CD8-positive, alpha-beta T cell (primary cell): ENCODE measurements at regions of chr2 and their contacts with region 1.

Region 1: DNA sequence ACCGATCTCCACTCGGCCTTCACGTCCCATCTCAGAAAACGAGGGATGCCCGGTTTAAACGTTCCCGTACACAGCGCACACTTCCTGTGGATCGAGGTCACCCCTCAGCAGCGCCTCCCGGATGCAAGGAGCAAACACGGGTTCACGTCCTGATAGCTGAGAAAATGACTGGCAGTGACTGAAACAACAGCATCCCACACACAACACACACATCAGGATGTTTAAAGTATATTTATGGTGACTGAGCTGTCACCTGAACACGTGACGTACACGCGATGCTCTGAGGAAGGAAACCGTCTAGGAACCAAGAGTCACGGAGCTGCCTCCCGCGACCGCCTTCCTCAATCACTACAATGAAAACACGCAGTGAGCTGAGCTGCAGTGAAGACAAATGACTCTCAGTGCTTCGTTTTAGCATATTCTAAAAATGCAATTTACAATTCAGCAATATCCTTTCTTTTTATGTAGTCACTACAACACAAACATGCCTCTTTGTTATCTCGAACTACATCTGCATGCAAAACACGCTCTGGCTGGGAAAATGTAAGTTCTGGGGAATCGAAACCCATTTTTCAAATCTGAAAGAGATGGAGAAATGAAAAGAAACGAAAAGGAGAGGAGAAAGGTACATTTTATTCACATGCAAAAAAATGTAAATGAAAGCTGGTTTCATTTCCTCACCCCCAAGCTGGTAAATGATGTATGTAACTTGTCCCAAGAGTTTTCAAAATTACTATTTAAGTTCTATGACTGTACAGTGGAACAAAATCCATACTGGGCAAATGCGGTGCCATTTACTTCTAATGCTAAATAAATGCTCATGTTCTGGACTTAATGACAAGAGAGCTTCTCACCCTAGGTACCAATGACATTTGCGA is 19.8 kb downstream of the HDAC4 start:
- DNase-seq: peak; percentile 51 to 87 (median 71)
- ATAC-seq: peak; percentile 90
- H3K4me3 ChIP-seq: peak overlapping the region; percentile 26 to 36
- H3K4me3 Mint-ChIP-seq: peak overlapping the region; percentile 86
- H3K27ac ChIP-seq: peak overlapping the region; percentile 42 to 62
- H3K27ac Mint-ChIP-seq: peak overlapping the region; percentile 96
- H3K4me1 ChIP-seq: peaks cover 17% of the 10 kb centered on the region
- H3K4me1 Mint-ChIP-seq: peaks cover 30% of the 10 kb centered on the region
- H3K27me3 ChIP-seq: no peaks in the 10 kb centered on the region
- H3K27me3 Mint-ChIP-seq: no peaks in the 10 kb centered on the region
- CTCF ChIP-seq: no peak

Region 2: DNA sequence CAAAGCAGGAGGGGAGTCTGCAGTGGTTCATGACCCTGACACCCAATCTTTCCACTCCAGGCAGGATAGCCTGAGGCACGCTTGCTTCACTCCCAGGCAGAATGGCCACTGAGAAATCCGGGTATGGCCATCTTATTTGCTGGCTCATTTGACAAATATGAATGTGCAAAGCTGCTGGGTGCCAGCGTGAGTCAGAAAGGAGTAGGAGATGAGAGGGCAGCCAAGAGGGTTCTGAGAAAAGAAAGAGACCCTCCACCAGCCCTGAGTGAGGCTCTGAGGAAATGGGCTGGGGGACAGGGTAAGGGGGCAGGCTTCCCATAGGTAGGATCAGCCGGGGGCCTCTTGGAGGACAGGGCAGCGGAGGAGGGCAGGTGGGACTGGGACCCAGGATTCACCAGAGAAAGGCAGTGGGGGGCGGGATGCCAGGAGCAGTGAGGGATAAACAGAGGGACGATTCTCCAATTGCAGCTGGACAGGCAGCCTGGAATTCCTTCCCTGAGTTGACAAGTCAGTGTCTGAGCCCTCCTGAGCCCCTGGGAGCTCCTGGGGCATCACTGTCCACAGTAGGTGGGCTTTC is 1506.4 kb before region 1 on chr2:
- CTCF ChIA-PET with region 1: no interaction called
- POLR2A ChIA-PET with region 1: no interaction called
- intact Hi-C with region 1: no loop called
- DNase-seq: no peak
- ATAC-seq: no peak
- H3K4me3 ChIP-seq: no peak overlapping the region
- H3K4me3 Mint-ChIP-seq: no peak overlapping the region
- H3K27ac ChIP-seq: no peak overlapping the region
- H3K27ac Mint-ChIP-seq: no peak overlapping the region
- H3K4me1 ChIP-seq: no peaks in the 10 kb centered on the region
- H3K4me1 Mint-ChIP-seq: peaks cover 7% of the 10 kb centered on the region
- H3K27me3 ChIP-seq: no peaks in the 10 kb centered on the region
- H3K27me3 Mint-ChIP-seq: peaks cover 11% of the 10 kb centered on the region
- CTCF ChIP-seq: no peak

Region 3: DNA sequence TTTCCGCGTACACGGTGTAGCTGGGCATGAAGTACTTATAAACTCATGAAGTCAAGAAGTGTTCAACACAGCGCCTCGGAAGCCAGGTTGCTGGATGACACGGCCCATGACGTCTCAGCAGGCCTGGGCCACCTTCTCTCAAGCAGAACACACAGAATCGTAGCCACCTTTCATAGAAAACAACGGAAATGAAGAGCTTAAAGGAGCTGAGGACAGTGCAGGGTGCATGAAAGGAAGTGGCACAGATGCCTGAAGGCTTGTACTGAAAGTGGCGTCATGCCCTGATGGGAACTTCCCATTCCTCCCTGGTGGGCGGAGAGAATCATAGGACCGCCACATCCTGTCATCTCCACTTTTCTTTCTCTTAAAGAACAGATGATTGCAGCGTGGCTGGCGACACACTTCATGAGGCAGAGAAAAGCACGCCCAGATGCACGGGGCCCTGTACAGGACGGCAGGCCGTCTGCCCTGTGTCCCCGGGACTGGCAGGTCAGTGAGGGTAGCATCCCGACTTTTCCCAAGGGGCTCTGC is 11.4 kb before region 1 on chr2:
- CTCF ChIA-PET with region 1: interaction called, 5 read pairs
- POLR2A ChIA-PET with region 1: interaction called, 6 read pairs
- intact Hi-C with region 1: loop called in 1 of 2 experiments (anchors 1 kb)
- DNase-seq: peak; percentile 34 to 93 (median 67)
- ATAC-seq: peak; percentile 94
- H3K4me3 ChIP-seq: peak overlapping the region; percentile 15 to 24
- H3K4me3 Mint-ChIP-seq: peak overlapping the region; percentile 63
- H3K27ac ChIP-seq: peak overlapping the region; percentile 71 to 84
- H3K27ac Mint-ChIP-seq: no peak overlapping the region
- H3K4me1 ChIP-seq: peaks cover 33% of the 10 kb centered on the region
- H3K4me1 Mint-ChIP-seq: peaks cover 20% of the 10 kb centered on the region
- H3K27me3 ChIP-seq: no peaks in the 10 kb centered on the region
- H3K27me3 Mint-ChIP-seq: no peaks in the 10 kb centered on the region
- CTCF ChIP-seq: no peak